ENCODE measurements at regions of chr9 and their contacts with region 1.

Region 1: DNA sequence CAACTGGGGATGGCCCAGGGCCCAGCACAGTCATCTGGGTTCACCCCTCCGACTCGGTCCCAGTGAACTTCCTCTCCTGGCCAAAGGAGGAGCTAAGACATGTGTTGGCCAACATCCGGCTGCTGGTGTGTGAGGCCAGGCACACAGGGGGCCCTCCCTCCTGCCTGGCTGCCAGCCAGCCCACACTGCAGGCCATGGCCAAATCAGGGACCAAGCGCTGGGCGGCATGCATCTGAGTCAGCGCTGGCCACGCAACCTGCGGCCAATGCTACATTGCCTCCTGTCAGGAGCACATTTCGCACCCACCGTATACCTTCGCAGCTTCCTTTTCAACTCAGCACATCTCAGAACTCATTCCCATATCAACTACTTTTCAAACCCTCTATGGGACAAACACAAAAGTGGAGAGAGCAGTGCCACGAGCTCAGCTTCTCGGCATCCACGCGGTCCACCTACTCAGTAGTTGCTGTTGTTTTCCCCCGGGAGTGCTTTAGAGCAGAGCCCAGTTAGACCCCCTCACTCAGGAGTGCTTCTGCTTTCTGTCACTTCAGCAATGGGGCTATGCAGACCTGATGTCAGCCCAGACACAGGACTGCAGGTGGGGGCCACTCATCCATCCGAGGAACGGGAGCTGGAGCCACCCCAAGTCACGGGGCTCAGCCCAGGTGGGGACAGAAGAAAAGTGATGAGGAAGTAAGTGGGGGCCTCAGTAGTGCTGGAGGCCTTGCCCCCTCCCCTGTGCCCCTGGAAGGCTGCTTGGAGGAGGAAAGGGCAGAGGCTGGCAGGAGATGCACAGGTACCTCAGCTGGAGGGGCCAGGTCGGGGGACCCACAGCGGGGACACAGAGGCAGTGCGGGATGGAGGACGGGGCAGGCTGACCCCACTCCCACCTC is 13.9 kb downstream of the NINJ1 start:
- DNase-seq: peak; percentile 64
- H3K4me3 Mint-ChIP-seq: peak overlapping the region; percentile 35
- H3K27ac Mint-ChIP-seq: peak overlapping the region; percentile 75
- H3K4me1 Mint-ChIP-seq: peaks cover 10% of the 10 kb centered on the region
- H3K27me3 Mint-ChIP-seq: no peaks in the 10 kb centered on the region

Region 2: GRCh38 chr9:92468206-92468605 is 652.0 kb before region 1 on chr9:
- CTCF ChIA-PET with region 1: no interaction called
- POLR2A ChIA-PET with region 1: no interaction called
- intact Hi-C with region 1: no loop called
- DNase-seq: no peak
- H3K4me3 Mint-ChIP-seq: no peak overlapping the region
- H3K27ac Mint-ChIP-seq: no peak overlapping the region
- H3K4me1 Mint-ChIP-seq: no peaks in the 10 kb centered on the region
- H3K27me3 Mint-ChIP-seq: no peaks in the 10 kb centered on the region

Region 3: DNA sequence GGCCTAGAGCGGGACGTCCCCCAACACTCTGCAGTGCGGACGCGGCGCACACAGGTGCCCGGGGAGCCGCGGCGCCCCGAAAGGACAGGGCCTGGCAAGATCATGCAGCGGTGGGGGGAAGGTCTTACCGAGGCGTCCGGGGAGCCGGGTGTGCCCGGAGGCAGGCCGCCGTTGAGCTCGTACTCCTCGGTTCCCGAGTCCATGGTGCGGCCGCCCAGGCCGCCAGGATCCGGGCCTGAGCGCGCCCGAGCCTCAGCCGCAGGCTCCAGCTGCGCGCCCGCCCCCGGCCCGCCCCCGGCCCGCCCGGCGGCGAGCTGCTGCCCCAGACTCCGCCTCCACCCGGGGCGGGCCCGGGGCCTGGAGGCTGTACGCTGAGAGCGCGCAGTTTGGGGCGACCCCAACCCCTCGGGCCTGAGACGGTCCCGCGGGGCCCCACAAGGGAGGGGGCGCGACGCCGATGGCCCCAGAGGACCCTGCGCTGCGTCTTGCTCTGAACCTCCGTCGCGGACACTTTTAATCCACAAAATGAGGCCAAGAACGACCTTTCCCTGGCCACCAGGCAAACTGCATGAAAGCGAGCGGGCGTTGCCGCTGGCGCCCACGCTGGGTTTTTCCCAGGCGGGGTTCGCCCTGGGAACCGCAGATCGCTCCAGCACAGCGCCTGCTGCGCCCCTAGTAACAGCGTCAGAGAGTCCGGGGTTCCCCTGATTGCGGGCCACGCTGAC is 14.0 kb after region 1 on chr9 and contains the start of gene NINJ1:
- CTCF ChIA-PET with region 1: no interaction called
- POLR2A ChIA-PET with region 1: interaction called, 16 read pairs
- intact Hi-C with region 1: no loop called
- DNase-seq: peak; percentile 94
- H3K4me3 Mint-ChIP-seq: peak within 1 kb of the TSS; percentile 94
- H3K27ac Mint-ChIP-seq: peak within 1 kb of the TSS; percentile 89
- H3K4me1 Mint-ChIP-seq: peaks cover 60% of the 10 kb centered on the region
- H3K27me3 Mint-ChIP-seq: no peaks in the 10 kb centered on the region
- total RNA-seq, gene NINJ1: 77.9 to 82.0 TPM

Region 4: GRCh38 chr9:93183609-93184431 is 63.6 kb after region 1 on chr9 and contains the start of gene WNK2:
- CTCF ChIA-PET with region 1: no interaction called
- POLR2A ChIA-PET with region 1: no interaction called
- intact Hi-C with region 1: no loop called
- DNase-seq: peak; percentile 44
- H3K4me3 Mint-ChIP-seq: peak within 1 kb of the TSS; percentile 59
- H3K27ac Mint-ChIP-seq: no peak within 1 kb of the TSS
- H3K4me1 Mint-ChIP-seq: peaks cover 9% of the 10 kb centered on the region
- H3K27me3 Mint-ChIP-seq: peaks cover 36% of the 10 kb centered on the region
- total RNA-seq, gene WNK2: 1.2 to 1.6 TPM

Region 5: GRCh38 chr9:93319992-93320500 is 199.8 kb after region 1 on chr9:
- CTCF ChIA-PET with region 1: no interaction called
- POLR2A ChIA-PET with region 1: no interaction called
- intact Hi-C with region 1: no loop called
- DNase-seq: no peak
- H3K4me3 Mint-ChIP-seq: no peak overlapping the region
- H3K27ac Mint-ChIP-seq: no peak overlapping the region
- H3K4me1 Mint-ChIP-seq: peaks cover 4% of the 10 kb centered on the region
- H3K27me3 Mint-ChIP-seq: peaks cover 20% of the 10 kb centered on the region